ENCODE measurements at regions of chr6 and their contacts with region 1.

Region 1: DNA sequence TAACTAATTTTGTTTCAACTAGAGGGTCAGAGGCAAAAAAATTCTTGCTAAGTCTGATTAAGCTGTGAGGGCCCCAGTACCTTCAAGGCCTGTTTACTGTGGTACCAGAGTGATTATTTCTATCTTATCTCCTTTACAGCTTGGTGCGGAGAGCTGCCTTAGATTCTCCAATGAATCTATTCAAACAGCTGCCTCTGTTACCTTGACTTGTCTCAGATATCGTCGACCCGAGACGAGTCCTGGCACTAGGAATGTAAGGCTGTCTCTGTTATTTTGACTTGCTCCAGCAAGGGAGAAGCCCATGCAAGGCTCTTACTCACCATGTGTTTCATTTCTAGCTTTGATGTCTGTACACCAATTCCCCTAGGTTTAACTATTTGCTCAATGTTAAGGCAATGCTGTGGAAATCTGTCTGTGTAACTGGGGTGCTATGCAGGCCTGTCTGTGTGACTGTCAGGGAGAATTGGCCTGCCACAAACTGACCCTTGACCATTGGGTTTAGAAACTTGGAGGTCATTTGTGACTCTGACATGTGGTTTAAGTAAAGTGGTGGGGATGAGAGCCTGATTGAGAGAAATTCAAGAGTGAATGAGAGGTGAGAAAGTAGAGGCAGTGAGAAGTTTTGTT is 10.4 kb upstream of the FKBPL start:
- DNase-seq: no peak
- H3K4me3 ChIP-seq: no peak overlapping the region
- H3K27ac ChIP-seq: no peak overlapping the region
- H3K4me1 ChIP-seq: peaks cover 19% of the 10 kb centered on the region
- H3K27me3 ChIP-seq: no peaks in the 10 kb centered on the region
- CTCF ChIP-seq: no peak

Region 2: DNA sequence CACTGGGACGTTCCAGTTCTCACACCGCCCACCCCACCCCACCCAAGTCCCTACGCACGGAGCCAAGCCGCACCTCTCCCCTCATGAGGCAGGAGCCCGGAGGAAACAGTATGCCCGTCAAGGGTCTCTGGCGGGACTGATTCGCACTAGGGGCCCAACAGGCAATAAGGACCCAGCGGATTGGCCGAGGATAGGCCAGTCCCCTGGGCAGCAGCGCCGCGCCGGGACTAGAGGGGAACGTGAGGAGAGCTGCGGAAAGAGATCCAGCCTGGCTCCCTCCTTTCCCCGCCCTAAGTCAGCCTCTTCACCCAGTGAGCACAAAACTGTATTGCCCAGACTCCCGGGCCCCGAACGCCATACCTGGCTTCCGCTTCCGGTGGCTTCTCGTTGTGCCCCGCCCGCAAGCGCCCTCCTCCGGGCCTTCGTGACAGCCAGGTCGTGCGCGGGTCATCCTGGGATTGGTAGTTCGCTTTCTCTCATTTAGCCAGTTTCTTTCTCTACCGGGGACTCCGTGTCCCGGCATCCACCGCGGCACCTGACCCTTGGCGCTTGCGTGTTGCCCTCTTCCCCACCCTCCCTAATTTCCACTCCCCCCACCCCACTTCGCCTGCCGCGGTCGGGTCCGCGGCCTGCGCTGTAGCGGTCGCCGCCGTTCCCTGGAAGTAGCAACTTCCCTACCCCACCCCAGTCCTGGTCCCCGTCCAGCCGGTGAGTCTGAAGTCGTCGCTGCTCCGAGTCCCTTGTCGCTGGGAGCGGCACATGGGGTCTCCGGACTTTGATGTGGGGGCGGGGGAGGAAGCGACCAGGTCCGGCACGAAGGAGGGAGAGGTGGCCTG is 474.8 kb before region 1 on chr6 and contains the start of gene CSNK2B:
- CTCF ChIA-PET with region 1: interaction called, 13 read pairs
- POLR2A ChIA-PET with region 1: no interaction called
- intact Hi-C with region 1: no loop called
- DNase-seq: peak; percentile 95 to 96
- H3K4me3 ChIP-seq: peak within 1 kb of the TSS; percentile 90
- H3K27ac ChIP-seq: peak within 1 kb of the TSS; percentile 80
- H3K4me1 ChIP-seq: peaks cover 24% of the 10 kb centered on the region
- H3K27me3 ChIP-seq: no peaks in the 10 kb centered on the region
- CTCF ChIP-seq: no peak
- total RNA-seq, gene CSNK2B: 152 and 173 TPM in 2 replicates

Region 3: GRCh38 chr6:31870385-31870921 is 270.1 kb before region 1 on chr6:
- CTCF ChIA-PET with region 1: no interaction called
- POLR2A ChIA-PET with region 1: no interaction called
- intact Hi-C with region 1: no loop called
- DNase-seq: no peak
- H3K4me3 ChIP-seq: no peak overlapping the region
- H3K27ac ChIP-seq: no peak overlapping the region
- H3K4me1 ChIP-seq: peaks cover 24% of the 10 kb centered on the region
- H3K27me3 ChIP-seq: no peaks in the 10 kb centered on the region
- CTCF ChIP-seq: no peak